Activated naive CD4-positive, alpha-beta T cell treated with anti-CD3 and anti-CD28 coated beads, Interleukin-2, amount 10 ng/mL, durations not matched to agents 7 days and 5 days (primary cell): ENCODE measurements at regions of chr6 and their contacts with region 1.

Region 1: GRCh38 chr6:2791124-2791974 is 26.2 kb downstream of the WRNIP1 start:
- DNase-seq: peak; percentile 76
- H3K4me3 Mint-ChIP-seq: no peak overlapping the region
- H3K27ac Mint-ChIP-seq: no peak overlapping the region
- H3K4me1 Mint-ChIP-seq: peaks cover 32% of the 10 kb centered on the region
- H3K27me3 Mint-ChIP-seq: no peaks in the 10 kb centered on the region

Region 2: GRCh38 chr6:2807342-2808090 is 16.2 kb after region 1 on chr6:
- CTCF ChIA-PET with region 1: interaction called, 10 read pairs
- DNase-seq: no peak
- H3K4me3 Mint-ChIP-seq: no peak overlapping the region
- H3K27ac Mint-ChIP-seq: no peak overlapping the region
- H3K4me1 Mint-ChIP-seq: peaks cover 9% of the 10 kb centered on the region
- H3K27me3 Mint-ChIP-seq: no peaks in the 10 kb centered on the region

Region 3: GRCh38 chr6:2854396-2854982 is 63.1 kb after region 1 on chr6:
- CTCF ChIA-PET with region 1: interaction called, 11 read pairs
- DNase-seq: no peak
- H3K4me3 Mint-ChIP-seq: peak overlapping the region; percentile 48
- H3K27ac Mint-ChIP-seq: peak overlapping the region; percentile 89
- H3K4me1 Mint-ChIP-seq: peaks cover 79% of the 10 kb centered on the region
- H3K27me3 Mint-ChIP-seq: no peaks in the 10 kb centered on the region

Region 4: GRCh38 chr6:2911171-2911570 is 119.8 kb after region 1 on chr6:
- CTCF ChIA-PET with region 1: interaction called, 24 read pairs
- DNase-seq: no peak
- H3K4me3 Mint-ChIP-seq: no peak overlapping the region
- H3K27ac Mint-ChIP-seq: no peak overlapping the region
- H3K4me1 Mint-ChIP-seq: peaks cover 29% of the 10 kb centered on the region
- H3K27me3 Mint-ChIP-seq: peaks cover 1% of the 10 kb centered on the region

Region 5: DNA sequence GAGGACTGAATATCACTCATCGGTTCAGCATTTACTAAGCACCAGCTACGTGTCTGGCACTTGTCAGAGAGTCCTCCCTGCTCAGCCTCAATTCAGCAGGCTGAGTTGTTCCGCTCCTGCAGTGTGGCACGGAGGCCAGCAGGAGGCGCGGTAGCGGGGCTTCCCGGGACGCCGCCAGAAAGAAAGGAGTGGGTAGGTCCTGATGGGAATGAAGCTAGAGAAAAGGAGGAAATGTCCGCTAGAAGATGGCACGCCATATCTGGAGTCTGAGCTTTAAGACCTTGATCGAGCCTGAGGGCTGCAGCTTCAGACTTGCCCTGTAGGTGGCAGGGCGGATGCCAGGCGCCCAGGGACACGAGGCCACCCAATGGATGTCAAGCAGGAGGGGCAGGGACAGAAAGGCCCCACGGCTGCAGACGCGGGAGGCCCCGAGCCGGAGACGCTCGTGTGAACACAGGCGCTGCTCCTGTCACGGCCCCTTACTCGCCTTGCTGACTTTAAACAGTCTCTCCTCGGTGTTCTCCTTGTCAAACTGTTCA is 161.3 kb after region 1 on chr6:
- CTCF ChIA-PET with region 1: interaction called, 10 read pairs
- DNase-seq: no peak
- H3K4me3 Mint-ChIP-seq: no peak overlapping the region
- H3K27ac Mint-ChIP-seq: no peak overlapping the region
- H3K4me1 Mint-ChIP-seq: peaks cover 5% of the 10 kb centered on the region
- H3K27me3 Mint-ChIP-seq: peaks cover 9% of the 10 kb centered on the region